MCF 10A (cell line): ENCODE measurements at regions of chr3 and their contacts with region 1.

Region 1: GRCh38 chr3:94694894-94695293 is 632.0 kb downstream of the NSUN3 start:
- DNase-seq: peak; percentile 60
- H3K4me3 Mint-ChIP-seq: no peak overlapping the region
- H3K27ac Mint-ChIP-seq: no peak overlapping the region
- H3K4me1 Mint-ChIP-seq: no peaks in the 10 kb centered on the region
- H3K27me3 Mint-ChIP-seq: no peaks in the 10 kb centered on the region
- CTCF ChIP-seq: no peak

Region 2: GRCh38 chr3:94758751-94759150 is 63.9 kb after region 1 on chr3:
- CTCF ChIA-PET with region 1: no interaction called
- POLR2A ChIA-PET with region 1: no interaction called
- intact Hi-C with region 1: loop called (anchors 10 kb)
- DNase-seq: no peak
- H3K4me3 Mint-ChIP-seq: no peak overlapping the region
- H3K27ac Mint-ChIP-seq: no peak overlapping the region
- H3K4me1 Mint-ChIP-seq: no peaks in the 10 kb centered on the region
- H3K27me3 Mint-ChIP-seq: peaks cover 71% of the 10 kb centered on the region
- CTCF ChIP-seq: no peak